ENCODE measurements at regions of chr11 and their contacts with region 1.

Region 1: GRCh38 chr11:111777094-111778046 is 11.2 kb upstream of the PPP2R1B start:
- DNase-seq: no peak
- ATAC-seq: peak; percentile 72
- H3K4me3 Mint-ChIP-seq: peak overlapping the region; percentile 35
- H3K27ac Mint-ChIP-seq: peak overlapping the region; percentile 72
- H3K4me1 Mint-ChIP-seq: peaks cover 23% of the 10 kb centered on the region
- H3K27me3 Mint-ChIP-seq: no peaks in the 10 kb centered on the region
- CTCF ChIP-seq: no peak

Region 2: GRCh38 chr11:111454561-111455192 is 322.7 kb before region 1 on chr11:
- CTCF ChIA-PET with region 1: no interaction called
- POLR2A ChIA-PET with region 1: no interaction called
- intact Hi-C with region 1: loop called (anchors 2 kb)
- DNase-seq: no peak
- ATAC-seq: no peak
- H3K4me3 Mint-ChIP-seq: no peak overlapping the region
- H3K27ac Mint-ChIP-seq: no peak overlapping the region
- H3K4me1 Mint-ChIP-seq: peaks cover 18% of the 10 kb centered on the region
- H3K27me3 Mint-ChIP-seq: peaks cover 49% of the 10 kb centered on the region
- CTCF ChIP-seq: no peak

Region 3: DNA sequence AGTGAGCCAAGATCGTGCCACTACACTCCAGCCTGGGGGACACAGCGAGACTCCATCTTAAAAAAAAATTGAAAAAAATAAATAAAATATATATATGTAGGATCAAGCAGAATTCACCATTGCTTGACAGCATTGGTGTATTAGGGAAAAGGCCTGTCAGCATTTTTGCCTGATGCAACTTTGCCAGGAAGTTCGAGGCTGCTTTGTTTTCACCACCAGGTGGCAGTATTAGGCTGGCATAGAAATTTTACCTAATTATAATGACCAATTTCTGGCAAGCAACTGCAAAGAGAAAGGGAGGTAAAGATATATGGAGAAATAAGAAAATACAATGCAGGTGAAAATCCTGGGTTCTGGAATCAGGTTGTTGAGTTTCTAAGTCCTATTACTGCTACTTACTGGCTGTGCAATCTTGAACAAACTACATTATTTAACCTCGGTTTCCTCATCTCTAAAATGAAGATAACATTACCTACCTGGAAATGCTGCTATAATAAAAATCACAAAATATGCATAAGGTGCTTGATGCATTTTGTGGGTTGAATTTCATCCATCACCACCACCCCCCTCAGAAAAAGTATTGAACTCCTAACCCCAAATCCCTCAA is 212.2 kb before region 1 on chr11:
- CTCF ChIA-PET with region 1: interaction called, 35 read pairs
- POLR2A ChIA-PET with region 1: no interaction called
- intact Hi-C with region 1: loop called (anchors 1 kb)
- DNase-seq: no peak
- ATAC-seq: peak; percentile 28
- H3K4me3 Mint-ChIP-seq: no peak overlapping the region
- H3K27ac Mint-ChIP-seq: no peak overlapping the region
- H3K4me1 Mint-ChIP-seq: no peaks in the 10 kb centered on the region
- H3K27me3 Mint-ChIP-seq: peaks cover 2% of the 10 kb centered on the region
- CTCF ChIP-seq: peak; percentile 40

Region 4: DNA sequence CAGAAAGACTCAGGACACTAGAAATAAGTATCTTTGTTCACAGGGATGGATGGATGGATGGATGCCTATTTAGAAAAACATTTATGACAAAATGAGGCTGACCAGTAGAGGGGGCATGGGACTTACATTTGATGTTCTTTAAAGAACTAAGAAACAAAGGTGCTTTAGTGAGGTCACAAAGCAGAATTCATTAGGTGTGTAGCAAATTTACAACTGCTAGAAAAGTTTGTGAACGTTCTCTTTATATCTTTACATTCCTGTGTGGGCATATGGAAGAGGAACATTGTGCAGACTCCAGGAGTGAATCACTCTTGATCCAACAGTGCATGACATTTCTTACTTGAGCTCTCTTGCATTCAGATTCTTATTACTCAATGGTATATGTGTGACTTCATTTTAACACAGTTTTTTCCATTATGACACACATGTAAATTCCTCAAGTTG is 191.0 kb before region 1 on chr11:
- CTCF ChIA-PET with region 1: interaction called, 71 read pairs
- POLR2A ChIA-PET with region 1: interaction called, 3 read pairs
- intact Hi-C with region 1: loop called (anchors 1 kb)
- DNase-seq: no peak
- ATAC-seq: peak; percentile 61
- H3K4me3 Mint-ChIP-seq: no peak overlapping the region
- H3K27ac Mint-ChIP-seq: no peak overlapping the region
- H3K4me1 Mint-ChIP-seq: peaks cover 4% of the 10 kb centered on the region
- H3K27me3 Mint-ChIP-seq: peaks cover 2% of the 10 kb centered on the region
- CTCF ChIP-seq: peak; percentile 69

Region 5: DNA sequence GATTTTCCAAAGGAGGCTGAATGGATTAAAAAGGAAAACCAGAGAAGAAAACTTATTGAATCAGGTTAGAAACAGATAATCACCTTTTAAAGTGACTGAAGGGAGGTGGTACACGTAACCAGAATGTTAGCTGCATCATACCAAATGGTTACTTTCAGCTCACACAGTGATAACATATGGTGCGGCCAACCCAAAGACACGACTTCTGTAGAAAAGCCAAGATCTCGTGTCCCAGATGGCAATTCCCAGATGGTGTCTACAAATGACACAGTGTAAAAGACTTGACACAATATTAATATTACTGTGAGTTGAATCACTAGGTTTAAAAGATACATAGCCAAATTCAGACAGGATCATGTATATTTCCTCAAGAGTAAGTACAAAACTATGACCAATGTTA is 16.3 kb before region 1 on chr11:
- CTCF ChIA-PET with region 1: interaction called, 47 read pairs
- POLR2A ChIA-PET with region 1: interaction called, 29 read pairs
- intact Hi-C with region 1: loop called (anchors 1 kb)
- DNase-seq: no peak
- ATAC-seq: no peak
- H3K4me3 Mint-ChIP-seq: no peak overlapping the region
- H3K27ac Mint-ChIP-seq: no peak overlapping the region
- H3K4me1 Mint-ChIP-seq: peaks cover 16% of the 10 kb centered on the region
- H3K27me3 Mint-ChIP-seq: no peaks in the 10 kb centered on the region
- CTCF ChIP-seq: no peak

Region 6: GRCh38 chr11:111766093-111766833 is 11.1 kb before region 1 on chr11 and contains the start of gene PPP2R1B:
- CTCF ChIA-PET with region 1: interaction called, 47 read pairs
- POLR2A ChIA-PET with region 1: interaction called, 29 read pairs
- intact Hi-C with region 1: loop called (anchors 1 kb)
- DNase-seq: peak; percentile 70
- ATAC-seq: peak; percentile 97
- H3K4me3 Mint-ChIP-seq: peak within 1 kb of the TSS; percentile 100
- H3K27ac Mint-ChIP-seq: peak within 1 kb of the TSS; percentile 93
- H3K4me1 Mint-ChIP-seq: peaks cover 25% of the 10 kb centered on the region
- H3K27me3 Mint-ChIP-seq: no peaks in the 10 kb centered on the region
- CTCF ChIP-seq: no peak
- total RNA-seq, gene PPP2R1B: 36.2 and 37.9 TPM in 2 replicates

Region 7: DNA sequence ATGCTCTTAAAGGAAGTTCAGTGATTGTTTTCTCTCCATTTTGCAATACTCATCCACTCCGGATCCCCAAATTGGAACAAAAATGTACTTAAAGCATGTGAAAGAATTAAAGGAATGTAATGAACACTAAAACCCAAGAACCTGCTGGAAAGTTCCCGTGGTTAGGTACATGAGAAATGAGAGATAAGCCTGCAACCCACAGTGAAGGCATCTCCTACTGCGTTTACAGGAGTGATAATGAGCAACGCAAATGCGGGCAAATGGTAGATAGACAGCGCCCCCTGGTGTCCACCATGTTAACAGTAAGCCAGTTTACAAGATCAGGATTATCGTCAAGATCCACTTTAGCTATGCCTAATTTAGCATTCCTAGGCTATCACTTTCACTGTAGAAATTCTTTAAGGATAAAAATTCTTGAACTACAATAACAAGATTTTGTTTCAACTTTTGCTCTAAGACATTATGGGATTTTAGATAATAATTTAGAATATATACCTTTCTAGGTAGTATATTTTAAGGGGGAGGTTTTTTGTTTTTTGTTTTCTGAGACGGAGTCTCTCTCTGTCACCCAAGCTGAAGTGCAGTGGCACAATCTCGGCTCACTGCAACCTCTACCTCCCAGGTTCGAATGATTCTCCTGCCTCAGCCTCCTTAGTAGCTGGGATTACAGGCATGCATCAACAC is 64.1 kb after region 1 on chr11:
- CTCF ChIA-PET with region 1: interaction called, 10 read pairs
- POLR2A ChIA-PET with region 1: no interaction called
- intact Hi-C with region 1: loop called (anchors 1 kb)
- DNase-seq: peak; percentile 69
- ATAC-seq: peak; percentile 84
- H3K4me3 Mint-ChIP-seq: no peak overlapping the region
- H3K27ac Mint-ChIP-seq: no peak overlapping the region
- H3K4me1 Mint-ChIP-seq: peaks cover 2% of the 10 kb centered on the region
- H3K27me3 Mint-ChIP-seq: no peaks in the 10 kb centered on the region
- CTCF ChIP-seq: peak; percentile 86